ENCODE measurements at regions of chr19 and their contacts with region 1.

Region 1: DNA sequence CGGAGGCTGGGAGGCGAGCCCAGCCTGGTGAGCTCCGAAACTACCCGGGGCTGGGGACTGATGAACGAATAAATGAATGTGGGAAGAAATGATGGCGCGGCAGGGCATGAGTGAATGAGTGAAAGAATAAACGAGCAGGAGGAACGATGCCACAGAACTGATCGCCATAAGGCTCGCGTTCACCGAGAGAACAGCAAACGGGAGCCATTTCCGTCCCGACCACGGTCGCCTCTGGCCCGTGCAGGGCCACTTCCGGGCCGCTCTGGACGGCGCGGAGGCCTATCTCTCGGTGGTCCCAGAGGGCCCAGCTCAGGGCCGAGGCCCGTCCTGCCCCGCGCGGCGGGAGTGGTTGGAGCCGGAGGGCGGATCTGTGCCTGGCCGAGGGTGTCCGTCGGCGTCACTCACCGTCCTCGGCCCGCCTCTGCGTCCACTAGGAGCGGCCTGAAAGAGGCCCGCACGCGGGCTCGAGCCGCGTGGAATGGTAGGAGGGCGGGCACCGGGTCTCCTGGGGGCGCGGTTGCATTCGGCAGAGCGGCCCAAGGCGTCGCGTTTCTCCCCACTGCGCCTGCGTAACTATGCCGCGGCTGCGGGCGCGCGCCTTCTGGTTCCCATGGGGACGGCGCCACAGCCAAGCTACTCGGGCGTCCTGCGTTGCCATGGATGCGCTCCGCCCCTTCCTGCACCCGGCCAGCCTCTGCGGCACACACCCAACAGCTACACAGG is at the start of gene ZNF497:
- DNase-seq: peak; percentile 98
- H3K4me3 ChIP-seq: peak within 1 kb of the TSS; percentile 54
- H3K27ac ChIP-seq: peak within 1 kb of the TSS; percentile 84
- H3K4me1 ChIP-seq: peaks cover 3% of the 10 kb centered on the region
- H3K27me3 ChIP-seq: no peaks in the 10 kb centered on the region
- CTCF ChIP-seq: no peak
- total RNA-seq, gene ZNF497: 0.98 to 1.9 TPM

Region 2: GRCh38 chr19:58218899-58219298 is 143.5 kb before region 1 on chr19:
- intact Hi-C with region 1: no loop called
- DNase-seq: no peak
- H3K4me3 ChIP-seq: no peak overlapping the region
- H3K27ac ChIP-seq: no peak overlapping the region
- H3K4me1 ChIP-seq: no peaks in the 10 kb centered on the region
- H3K27me3 ChIP-seq: no peaks in the 10 kb centered on the region
- CTCF ChIP-seq: no peak

Region 3: DNA sequence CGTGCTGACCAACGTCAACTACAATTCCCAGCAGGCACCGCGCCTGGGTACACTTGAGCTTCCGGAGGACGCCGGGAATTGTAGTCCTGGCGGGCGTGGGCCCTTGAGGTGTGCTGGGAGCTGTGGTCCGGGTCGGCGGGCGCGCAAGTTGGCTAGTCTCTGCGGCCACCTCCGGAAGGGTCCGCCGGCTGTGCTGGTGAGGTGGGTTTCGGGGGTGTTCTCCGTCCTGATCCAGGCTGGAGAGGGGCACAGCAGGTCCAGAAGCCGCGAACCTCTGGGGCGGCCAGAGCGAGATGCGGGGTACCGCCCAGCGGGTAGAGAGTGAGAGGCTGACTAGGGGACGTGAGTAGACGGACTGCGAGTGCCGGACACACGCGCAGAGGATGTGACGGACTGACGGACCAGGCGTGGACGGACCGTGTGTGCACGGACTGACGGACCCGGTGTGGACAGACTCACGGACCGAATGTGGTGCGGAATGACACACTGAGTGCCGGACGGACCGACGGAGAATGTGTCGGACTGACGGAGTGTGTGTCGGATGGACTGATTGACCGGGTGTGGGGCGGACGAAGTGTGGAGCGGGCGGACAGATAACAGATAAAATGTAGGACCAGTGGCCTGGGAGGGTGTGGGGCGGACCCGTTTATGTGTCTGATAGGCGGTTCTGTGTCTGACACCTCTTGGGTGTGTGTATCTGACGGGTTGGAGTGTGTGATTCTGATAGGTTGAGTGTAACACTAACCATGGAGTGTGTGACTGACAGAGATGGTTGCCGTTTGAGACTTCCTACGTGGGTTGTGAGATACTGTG is 35.3 kb before region 1 on chr19 and contains the start of gene ZSCAN22:
- intact Hi-C with region 1: no loop called
- DNase-seq: peak; percentile 98
- H3K4me3 ChIP-seq: peak within 1 kb of the TSS; percentile 84
- H3K27ac ChIP-seq: peak within 1 kb of the TSS; percentile 94
- H3K4me1 ChIP-seq: peaks cover 12% of the 10 kb centered on the region
- H3K27me3 ChIP-seq: no peaks in the 10 kb centered on the region
- CTCF ChIP-seq: no peak
- total RNA-seq, gene ZSCAN22: 3.0 to 3.7 TPM

Region 4: DNA sequence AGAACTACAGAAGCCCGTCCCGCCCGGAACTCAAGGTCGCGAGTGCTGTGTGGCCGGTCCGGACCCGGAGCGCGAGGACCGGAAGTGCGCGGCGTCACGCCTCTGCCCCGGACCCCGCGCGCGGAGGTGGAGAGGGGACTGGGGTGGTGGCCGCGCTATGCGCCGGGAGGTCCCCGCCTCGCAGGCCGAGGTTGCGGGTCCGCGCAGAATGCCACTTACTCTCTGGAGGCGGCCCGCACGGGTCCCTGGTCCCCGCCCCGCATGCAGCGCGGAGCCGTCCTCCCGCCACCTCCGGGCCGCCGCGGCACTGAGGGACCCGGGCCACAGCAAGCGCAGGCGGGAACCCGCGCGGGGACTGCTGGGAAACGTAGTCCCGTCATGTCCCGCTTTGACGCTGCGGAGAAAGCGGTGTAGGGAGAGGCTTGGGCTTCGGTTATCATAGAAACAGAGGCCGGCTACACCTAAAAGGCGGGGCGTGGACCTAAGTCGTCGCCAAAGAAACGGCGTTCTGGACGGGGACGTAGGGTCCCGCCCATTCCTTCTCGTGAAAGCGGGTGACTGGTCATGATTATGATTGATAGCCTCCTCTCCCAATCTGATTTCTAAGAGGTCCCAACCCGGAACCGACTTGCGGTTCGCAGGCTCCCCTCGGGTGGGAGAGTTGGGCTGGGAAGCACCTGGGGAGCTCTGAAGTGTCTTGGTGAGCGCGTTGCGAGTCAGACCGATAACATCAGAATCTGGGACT is 18.5 kb after region 1 on chr19 and contains the start of gene ZNF837:
- intact Hi-C with region 1: loop called (anchors 2 kb)
- DNase-seq: peak; percentile 99
- H3K4me3 ChIP-seq: peak within 1 kb of the TSS; percentile 80
- H3K27ac ChIP-seq: peak within 1 kb of the TSS; percentile 88
- H3K4me1 ChIP-seq: peaks cover 4% of the 10 kb centered on the region
- H3K27me3 ChIP-seq: no peaks in the 10 kb centered on the region
- CTCF ChIP-seq: no peak
- total RNA-seq, gene ZNF837: 1.8 to 2.6 TPM

Region 5: GRCh38 chr19:58499021-58499927 is 136.8 kb after region 1 on chr19:
- intact Hi-C with region 1: no loop called
- DNase-seq: peak; percentile 100
- H3K4me3 ChIP-seq: peak overlapping the region; percentile 52
- H3K27ac ChIP-seq: peak overlapping the region; percentile 56
- H3K4me1 ChIP-seq: no peaks in the 10 kb centered on the region
- H3K27me3 ChIP-seq: no peaks in the 10 kb centered on the region
- CTCF ChIP-seq: no peak